B cell (primary cell): ENCODE measurements at regions of chr17 and their contacts with region 1.

Region 1: DNA sequence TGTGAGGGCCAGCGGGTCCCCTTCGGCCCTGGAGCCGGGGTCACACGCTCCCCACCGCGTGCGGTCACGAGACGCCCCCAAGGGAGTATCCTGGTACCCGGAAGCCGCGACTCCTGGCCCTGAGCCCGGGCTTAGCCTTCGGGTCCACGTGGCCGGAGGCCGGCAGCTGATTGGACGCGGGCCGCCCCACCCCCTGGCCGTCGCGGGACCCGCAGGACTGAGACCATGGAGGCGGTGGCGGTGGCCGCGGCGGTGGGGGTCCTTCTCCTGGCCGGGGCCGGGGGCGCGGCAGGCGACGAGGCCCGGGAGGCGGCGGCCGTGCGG is at the start of gene NAGLU:
- DNase-seq: peak; percentile 95
- ATAC-seq: peak; percentile 90
- H3K4me3 ChIP-seq: peak within 1 kb of the TSS; percentile 51 to 82 (median 70)
- H3K4me3 Mint-ChIP-seq: peak within 1 kb of the TSS; percentile 93
- H3K27ac ChIP-seq: peak within 1 kb of the TSS; percentile 86 to 94
- H3K27ac Mint-ChIP-seq: peak within 1 kb of the TSS; percentile 87
- H3K4me1 ChIP-seq: peaks cover 24 to 31% of the 10 kb centered on the region in 2 donors
- H3K4me1 Mint-ChIP-seq: peaks cover 41% of the 10 kb centered on the region
- H3K27me3 ChIP-seq: no peaks in the 10 kb centered on the region
- H3K27me3 Mint-ChIP-seq: no peaks in the 10 kb centered on the region
- CTCF ChIP-seq: no peak
- total RNA-seq, gene NAGLU: 44.8 and 47.1 TPM in 2 replicates

Region 2: DNA sequence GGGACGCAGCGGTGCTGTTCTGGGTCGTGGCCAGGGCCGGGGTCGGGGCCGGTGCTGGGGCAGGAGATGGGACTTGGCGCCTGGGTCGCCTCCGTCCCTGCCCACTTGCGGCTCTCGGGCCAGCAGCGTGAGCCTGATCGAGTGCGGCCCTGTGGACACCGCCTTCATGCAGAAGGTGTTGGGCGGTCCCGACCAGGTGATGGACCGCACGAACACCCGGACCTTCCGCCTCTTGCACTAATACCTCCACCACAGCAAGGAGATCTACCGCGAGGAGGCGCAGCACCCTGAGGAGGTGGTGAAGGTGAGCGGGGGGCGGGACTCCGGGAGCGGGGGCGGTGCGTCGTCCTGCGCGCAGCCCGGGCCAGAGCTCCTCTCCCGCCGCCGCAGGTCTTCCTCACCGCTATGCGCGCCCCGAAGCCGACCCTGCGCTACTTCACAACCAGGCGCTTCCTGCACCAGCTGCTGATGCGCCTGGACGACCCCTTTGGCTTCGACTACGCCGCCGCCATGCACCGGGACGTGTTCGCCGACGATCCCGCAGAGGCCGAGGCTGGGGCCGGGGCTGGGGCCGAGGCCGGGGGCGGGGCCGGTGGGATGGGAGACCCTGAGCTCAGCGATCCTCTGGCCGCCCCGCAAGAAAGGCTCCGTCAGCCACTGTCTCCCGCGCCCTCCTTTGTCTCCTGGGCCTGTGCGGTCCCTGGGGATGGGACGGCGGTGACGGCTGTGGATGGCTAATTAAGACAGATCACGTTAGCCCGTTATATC is 12.2 kb after region 1 on chr17:
- CTCF ChIA-PET with region 1: interaction called, 16 read pairs
- POLR2A ChIA-PET with region 1: interaction called, 8 read pairs
- intact Hi-C with region 1: loop called (anchors 1 kb)
- DNase-seq: peak; percentile 89
- ATAC-seq: peak; percentile 97
- H3K4me3 ChIP-seq: peak overlapping the region in 4 of 5 experiments; percentile 45 to 66 (median 53)
- H3K4me3 Mint-ChIP-seq: peak overlapping the region; percentile 74
- H3K27ac ChIP-seq: no peak overlapping the region
- H3K27ac Mint-ChIP-seq: no peak overlapping the region
- H3K4me1 ChIP-seq: peaks cover 10 to 18% of the 10 kb centered on the region in 2 donors
- H3K4me1 Mint-ChIP-seq: peaks cover 17% of the 10 kb centered on the region
- H3K27me3 ChIP-seq: no peaks in the 10 kb centered on the region
- H3K27me3 Mint-ChIP-seq: no peaks in the 10 kb centered on the region
- CTCF ChIP-seq: peak; percentile 74

Region 3: GRCh38 chr17:42554250-42555121 is 18.5 kb after region 1 on chr17:
- CTCF ChIA-PET with region 1: interaction called, 16 read pairs
- POLR2A ChIA-PET with region 1: interaction called, 6 read pairs
- intact Hi-C with region 1: loop called (anchors 2 kb)
- DNase-seq: peak; percentile 94
- ATAC-seq: peak; percentile 91
- H3K4me3 ChIP-seq: peak overlapping the region; percentile 61 to 99 (median 90)
- H3K4me3 Mint-ChIP-seq: peak overlapping the region; percentile 96
- H3K27ac ChIP-seq: peak overlapping the region; percentile 88 to 96
- H3K27ac Mint-ChIP-seq: peak overlapping the region; percentile 98
- H3K4me1 ChIP-seq: peaks cover 15 to 27% of the 10 kb centered on the region in 2 donors
- H3K4me1 Mint-ChIP-seq: peaks cover 20% of the 10 kb centered on the region
- H3K27me3 ChIP-seq: no peaks in the 10 kb centered on the region
- H3K27me3 Mint-ChIP-seq: no peaks in the 10 kb centered on the region
- CTCF ChIP-seq: no peak

Region 4: GRCh38 chr17:42566883-42567573 is 31.0 kb after region 1 on chr17 and contains the start of gene MLX:
- CTCF ChIA-PET with region 1: interaction called, 3 read pairs
- POLR2A ChIA-PET with region 1: interaction called, 3 read pairs
- intact Hi-C with region 1: loop called (anchors 1 kb)
- DNase-seq: peak; percentile 94
- ATAC-seq: peak; percentile 80
- H3K4me3 ChIP-seq: peak within 1 kb of the TSS; percentile 66 to 88 (median 74)
- H3K4me3 Mint-ChIP-seq: peak within 1 kb of the TSS; percentile 99
- H3K27ac ChIP-seq: peak within 1 kb of the TSS; percentile 76 to 78
- H3K27ac Mint-ChIP-seq: peak within 1 kb of the TSS; percentile 98
- H3K4me1 ChIP-seq: peaks cover 26 to 42% of the 10 kb centered on the region in 2 donors
- H3K4me1 Mint-ChIP-seq: peaks cover 35% of the 10 kb centered on the region
- H3K27me3 ChIP-seq: no peaks in the 10 kb centered on the region
- H3K27me3 Mint-ChIP-seq: no peaks in the 10 kb centered on the region
- CTCF ChIP-seq: no peak
- total RNA-seq, gene MLX: 66.6 and 71.5 TPM in 2 replicates

Region 5: GRCh38 chr17:42586514-42587230 is 50.7 kb after region 1 on chr17:
- CTCF ChIA-PET with region 1: no interaction called
- POLR2A ChIA-PET with region 1: no interaction called
- intact Hi-C with region 1: no loop called
- DNase-seq: peak; percentile 50
- ATAC-seq: peak; percentile 51
- H3K4me3 ChIP-seq: peak overlapping the region in 1 of 5 experiments; percentile 15
- H3K4me3 Mint-ChIP-seq: peak overlapping the region; percentile 76
- H3K27ac ChIP-seq: peak overlapping the region; percentile 24 to 65
- H3K27ac Mint-ChIP-seq: peak overlapping the region; percentile 95
- H3K4me1 ChIP-seq: peaks cover 16 to 31% of the 10 kb centered on the region in 2 donors
- H3K4me1 Mint-ChIP-seq: peaks cover 36% of the 10 kb centered on the region
- H3K27me3 ChIP-seq: no peaks in the 10 kb centered on the region
- H3K27me3 Mint-ChIP-seq: no peaks in the 10 kb centered on the region
- CTCF ChIP-seq: no peak

Region 6: DNA sequence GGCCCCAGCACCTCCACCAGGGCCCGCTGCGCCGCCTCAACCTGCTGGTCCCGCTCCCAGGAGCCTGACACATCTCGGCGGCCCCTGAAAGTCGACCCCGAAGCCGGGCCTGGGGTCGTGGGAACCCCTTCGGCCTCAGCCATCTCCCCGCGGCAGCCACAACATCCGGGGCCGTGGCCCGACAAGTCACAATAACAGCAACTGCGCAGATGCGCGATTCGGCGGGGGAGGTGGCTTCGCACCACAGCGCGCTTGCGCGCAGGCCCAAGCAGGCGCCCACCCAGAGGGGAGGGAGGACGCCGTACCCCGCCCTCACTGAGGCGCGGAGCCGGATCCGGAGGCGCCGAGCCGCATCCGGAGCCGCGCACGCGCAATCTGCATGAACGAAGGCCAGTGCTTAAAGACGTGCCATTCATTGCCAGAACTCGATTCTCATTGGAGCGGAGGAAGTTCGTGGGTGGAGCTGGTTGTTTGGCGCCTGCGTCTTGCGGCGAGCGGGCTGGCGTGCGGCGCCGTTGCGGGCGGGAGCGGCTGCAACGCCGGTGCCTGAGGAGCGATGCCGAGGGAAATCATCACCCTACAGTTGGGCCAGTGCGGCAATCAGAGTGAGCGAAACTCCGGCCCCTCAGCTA is 73.3 kb after region 1 on chr17 and contains the starts of genes RETREG3 and TUBG1:
- CTCF ChIA-PET with region 1: interaction called, 4 read pairs
- POLR2A ChIA-PET with region 1: no interaction called
- intact Hi-C with region 1: loop called (anchors 1 kb)
- DNase-seq: peak; percentile 100
- ATAC-seq: peak; percentile 91
- H3K4me3 ChIP-seq: peak within 1 kb of the TSS; percentile 73 to 95 (median 85)
- H3K4me3 Mint-ChIP-seq: peak within 1 kb of the TSS; percentile 100
- H3K27ac ChIP-seq: peak within 1 kb of the TSS; percentile 79 to 95
- H3K27ac Mint-ChIP-seq: peak within 1 kb of the TSS; percentile 98
- H3K4me1 ChIP-seq: peaks cover 38 to 42% of the 10 kb centered on the region in 2 donors
- H3K4me1 Mint-ChIP-seq: peaks cover 51% of the 10 kb centered on the region
- H3K27me3 ChIP-seq: no peaks in the 10 kb centered on the region
- H3K27me3 Mint-ChIP-seq: no peaks in the 10 kb centered on the region
- CTCF ChIP-seq: peak; percentile 37
- total RNA-seq, gene RETREG3: 103 and 108 TPM in 2 replicates
- total RNA-seq, gene TUBG1: 15.7 and 17.2 TPM in 2 replicates

Region 7: DNA sequence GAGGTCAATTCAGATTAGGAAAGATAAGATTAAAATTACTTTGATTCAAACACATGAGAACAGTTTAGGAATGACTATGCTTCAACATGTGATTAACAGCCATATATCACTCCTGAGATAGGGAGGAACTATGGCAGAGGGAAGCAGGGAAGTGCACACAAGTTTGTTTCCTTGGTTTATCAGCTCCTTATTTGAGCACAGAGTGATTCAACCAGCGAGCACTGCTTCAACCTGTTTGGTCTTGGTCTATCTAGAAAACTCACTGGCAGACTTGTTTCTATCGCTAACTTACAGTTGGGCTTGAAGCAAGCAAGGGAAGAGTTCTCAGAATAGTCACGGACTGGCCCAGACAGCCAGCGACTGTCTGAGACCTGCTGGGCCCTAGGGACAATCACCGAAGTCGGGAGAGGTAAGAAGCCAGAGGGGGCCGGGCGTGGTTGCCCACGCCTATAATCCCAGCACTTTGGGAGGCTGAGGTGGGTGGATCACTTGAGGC is 97.0 kb after region 1 on chr17:
- CTCF ChIA-PET with region 1: no interaction called
- POLR2A ChIA-PET with region 1: no interaction called
- intact Hi-C with region 1: no loop called
- DNase-seq: no peak
- ATAC-seq: no peak
- H3K4me3 ChIP-seq: no peak overlapping the region
- H3K4me3 Mint-ChIP-seq: no peak overlapping the region
- H3K27ac ChIP-seq: no peak overlapping the region
- H3K27ac Mint-ChIP-seq: peak overlapping the region; percentile 32
- H3K4me1 ChIP-seq: no peaks in the 10 kb centered on the region
- H3K4me1 Mint-ChIP-seq: no peaks in the 10 kb centered on the region
- H3K27me3 ChIP-seq: no peaks in the 10 kb centered on the region
- H3K27me3 Mint-ChIP-seq: no peaks in the 10 kb centered on the region
- CTCF ChIP-seq: no peak